ENCODE measurements at regions of chr7 and their contacts with region 1.

Region 1: GRCh38 chr7:70156057-70156456 is 557.8 kb downstream of the AUTS2 start:
- DNase-seq: no peak
- H3K4me3 ChIP-seq: no peak overlapping the region
- H3K4me3 Mint-ChIP-seq: no peak overlapping the region
- H3K27ac Mint-ChIP-seq: no peak overlapping the region
- H3K4me1 ChIP-seq: no peaks in the 10 kb centered on the region
- H3K4me1 Mint-ChIP-seq: no peaks in the 10 kb centered on the region
- H3K27me3 ChIP-seq: no peaks in the 10 kb centered on the region
- H3K27me3 Mint-ChIP-seq: peaks cover 3% of the 10 kb centered on the region
- CTCF ChIP-seq: no peak

Region 2: GRCh38 chr7:70040970-70041766 is 114.9 kb before region 1 on chr7:
- CTCF ChIA-PET with region 1: interaction called, 25 read pairs
- POLR2A ChIA-PET with region 1: no interaction called
- intact Hi-C with region 1: no loop called
- DNase-seq: no peak
- H3K4me3 ChIP-seq: no peak overlapping the region
- H3K4me3 Mint-ChIP-seq: no peak overlapping the region
- H3K27ac Mint-ChIP-seq: no peak overlapping the region
- H3K4me1 ChIP-seq: no peaks in the 10 kb centered on the region
- H3K4me1 Mint-ChIP-seq: no peaks in the 10 kb centered on the region
- H3K27me3 ChIP-seq: no peaks in the 10 kb centered on the region
- H3K27me3 Mint-ChIP-seq: peaks cover 5% of the 10 kb centered on the region
- CTCF ChIP-seq: peak in 1 of 2 experiments; percentile 32

Region 3: DNA sequence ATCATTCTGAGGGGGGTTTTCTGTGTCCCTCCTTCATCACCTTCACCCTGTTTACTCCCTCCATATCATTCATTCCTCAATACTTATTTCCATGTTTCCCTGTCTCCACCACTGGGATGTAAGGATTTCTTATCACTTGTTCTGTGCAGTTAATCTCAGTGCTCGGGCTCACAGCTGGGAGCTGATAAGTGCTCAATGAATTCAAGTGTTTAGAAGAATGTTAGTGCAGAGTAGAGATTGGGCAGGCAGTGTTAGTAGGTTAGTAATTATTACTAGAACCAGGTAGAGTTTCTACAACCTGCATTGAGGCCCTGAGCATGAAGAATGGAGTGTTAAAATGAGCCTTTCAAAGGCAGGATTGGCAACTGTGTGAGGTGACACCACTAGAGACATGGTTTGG is 99.7 kb before region 1 on chr7:
- CTCF ChIA-PET with region 1: no interaction called
- POLR2A ChIA-PET with region 1: no interaction called
- intact Hi-C with region 1: loop called (anchors 5 kb)
- DNase-seq: no peak
- H3K4me3 ChIP-seq: no peak overlapping the region
- H3K4me3 Mint-ChIP-seq: no peak overlapping the region
- H3K27ac Mint-ChIP-seq: no peak overlapping the region
- H3K4me1 ChIP-seq: no peaks in the 10 kb centered on the region
- H3K4me1 Mint-ChIP-seq: peaks cover 8% of the 10 kb centered on the region
- H3K27me3 ChIP-seq: no peaks in the 10 kb centered on the region
- H3K27me3 Mint-ChIP-seq: peaks cover 6% of the 10 kb centered on the region
- CTCF ChIP-seq: no peak

Region 4: DNA sequence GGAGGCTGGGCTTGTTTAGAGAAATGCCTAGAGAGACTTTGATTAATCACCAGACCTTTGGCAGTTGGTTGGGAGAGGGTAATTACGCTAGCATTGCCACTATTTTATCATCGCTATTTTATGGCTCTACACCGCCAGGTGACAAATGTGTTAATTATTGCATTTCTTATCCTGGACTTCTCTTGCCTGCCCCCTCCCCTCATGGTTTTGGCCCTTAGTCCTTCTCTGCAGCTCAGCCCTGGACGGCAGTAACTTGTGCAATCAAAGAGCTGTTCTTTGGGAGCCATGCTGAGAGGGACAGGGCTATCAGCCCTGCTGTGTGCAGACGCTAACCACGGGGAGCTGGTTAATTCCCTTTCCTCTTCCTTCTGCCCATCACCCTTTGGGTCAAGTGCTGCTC is 27.2 kb after region 1 on chr7:
- CTCF ChIA-PET with region 1: no interaction called
- POLR2A ChIA-PET with region 1: no interaction called
- intact Hi-C with region 1: no loop called
- DNase-seq: no peak
- H3K4me3 ChIP-seq: no peak overlapping the region
- H3K4me3 Mint-ChIP-seq: no peak overlapping the region
- H3K27ac Mint-ChIP-seq: no peak overlapping the region
- H3K4me1 ChIP-seq: no peaks in the 10 kb centered on the region
- H3K4me1 Mint-ChIP-seq: no peaks in the 10 kb centered on the region
- H3K27me3 ChIP-seq: no peaks in the 10 kb centered on the region
- H3K27me3 Mint-ChIP-seq: no peaks in the 10 kb centered on the region
- CTCF ChIP-seq: no peak

Region 5: GRCh38 chr7:70215491-70215890 is 59.4 kb after region 1 on chr7:
- CTCF ChIA-PET with region 1: no interaction called
- POLR2A ChIA-PET with region 1: no interaction called
- intact Hi-C with region 1: no loop called
- DNase-seq: no peak
- H3K4me3 ChIP-seq: no peak overlapping the region
- H3K4me3 Mint-ChIP-seq: no peak overlapping the region
- H3K27ac Mint-ChIP-seq: peak overlapping the region; percentile 61
- H3K4me1 ChIP-seq: peaks cover 84% of the 10 kb centered on the region
- H3K4me1 Mint-ChIP-seq: peaks cover 38% of the 10 kb centered on the region
- H3K27me3 ChIP-seq: no peaks in the 10 kb centered on the region
- H3K27me3 Mint-ChIP-seq: no peaks in the 10 kb centered on the region
- CTCF ChIP-seq: no peak

Region 6: DNA sequence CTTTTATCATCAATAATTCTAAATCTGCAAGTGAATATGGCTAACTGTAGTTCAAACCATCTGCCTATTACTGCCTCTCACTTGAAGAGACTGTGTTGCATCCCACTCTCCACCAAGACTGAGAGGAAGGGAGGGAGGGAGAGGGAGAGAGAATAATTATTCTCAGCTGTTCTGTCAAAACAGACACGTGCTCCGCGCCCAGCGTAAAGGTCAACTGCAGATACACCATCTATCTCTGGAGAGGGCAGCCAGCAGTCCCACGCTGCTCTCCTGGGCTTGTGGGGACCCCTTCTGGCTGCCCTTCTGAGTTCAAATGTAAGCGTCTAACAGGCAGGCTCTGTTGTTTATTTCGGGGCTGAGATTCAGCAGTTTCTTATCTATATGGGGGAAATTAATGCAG is 350.4 kb after region 1 on chr7:
- CTCF ChIA-PET with region 1: no interaction called
- POLR2A ChIA-PET with region 1: no interaction called
- intact Hi-C with region 1: loop called (anchors 2 kb)
- DNase-seq: peak; percentile 69 to 73
- H3K4me3 ChIP-seq: no peak overlapping the region
- H3K4me3 Mint-ChIP-seq: no peak overlapping the region
- H3K27ac Mint-ChIP-seq: no peak overlapping the region
- H3K4me1 ChIP-seq: no peaks in the 10 kb centered on the region
- H3K4me1 Mint-ChIP-seq: no peaks in the 10 kb centered on the region
- H3K27me3 ChIP-seq: no peaks in the 10 kb centered on the region
- H3K27me3 Mint-ChIP-seq: no peaks in the 10 kb centered on the region
- CTCF ChIP-seq: peak; percentile 51 to 79

Measured in Caco-2 (cell line).